CD4-positive, alpha-beta memory T cell (primary cell): ENCODE measurements at regions of chr5 and their contacts with region 1.

Region 1: DNA sequence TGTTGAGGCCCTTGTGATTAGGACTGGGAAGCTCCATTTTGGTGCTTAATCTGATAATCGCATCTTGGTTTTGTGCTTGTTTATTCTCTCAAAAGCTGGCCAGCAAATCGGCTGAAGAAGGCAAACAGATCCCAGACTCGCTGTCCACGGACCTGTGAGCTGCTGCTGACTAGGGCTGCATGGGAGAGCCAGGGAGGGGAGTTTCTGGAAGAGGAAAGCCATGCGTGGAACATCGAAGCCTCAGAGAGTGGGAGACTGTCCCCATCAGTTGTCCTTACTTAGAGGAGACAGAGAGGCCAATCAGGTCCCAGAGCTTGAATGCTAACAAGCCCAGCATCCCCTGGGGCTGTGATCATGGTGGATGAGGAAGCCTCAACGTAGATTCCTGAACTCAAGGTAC is 23.0 kb upstream of the FOXI1 start:
- DNase-seq: no peak
- H3K4me3 ChIP-seq: no peak overlapping the region
- H3K4me3 Mint-ChIP-seq: no peak overlapping the region
- H3K27ac ChIP-seq: no peak overlapping the region
- H3K27ac Mint-ChIP-seq: peak overlapping the region in 2 of 7 donors; percentile 15 to 51
- H3K4me1 ChIP-seq: no peaks in the 10 kb centered on the region
- H3K4me1 Mint-ChIP-seq: peaks cover 0 to 2% (median 0%) of the 10 kb centered on the region in 4 donors
- H3K27me3 ChIP-seq: no peaks in the 10 kb centered on the region
- H3K27me3 Mint-ChIP-seq: no peaks in the 10 kb centered on the region

Region 2: GRCh38 chr5:170070556-170071412 is 11.9 kb before region 1 on chr5:
- CTCF ChIA-PET with region 1: interaction called, 10 read pairs
- POLR2A ChIA-PET with region 1: no interaction called
- intact Hi-C with region 1: no loop called
- DNase-seq: no peak
- H3K4me3 ChIP-seq: no peak overlapping the region
- H3K4me3 Mint-ChIP-seq: no peak overlapping the region
- H3K27ac ChIP-seq: no peak overlapping the region
- H3K27ac Mint-ChIP-seq: peak overlapping the region in 1 of 7 donors; percentile 23
- H3K4me1 ChIP-seq: no peaks in the 10 kb centered on the region
- H3K4me1 Mint-ChIP-seq: no peaks in the 10 kb centered on the region
- H3K27me3 ChIP-seq: no peaks in the 10 kb centered on the region
- H3K27me3 Mint-ChIP-seq: no peaks in the 10 kb centered on the region